ENCODE measurements at regions of chr3 and their contacts with region 1.

Region 1: GRCh38 chr3:50192689-50193141 is 1.3 kb downstream of the GNAT1 start:
- DNase-seq: peak in 2 of 3 donors; percentile 85 to 89
- ATAC-seq: peak; percentile 66
- H3K4me3 ChIP-seq: no peak overlapping the region
- H3K4me1 ChIP-seq: peaks cover 6% of the 10 kb centered on the region
- CTCF ChIP-seq: peak; percentile 87

Region 2: DNA sequence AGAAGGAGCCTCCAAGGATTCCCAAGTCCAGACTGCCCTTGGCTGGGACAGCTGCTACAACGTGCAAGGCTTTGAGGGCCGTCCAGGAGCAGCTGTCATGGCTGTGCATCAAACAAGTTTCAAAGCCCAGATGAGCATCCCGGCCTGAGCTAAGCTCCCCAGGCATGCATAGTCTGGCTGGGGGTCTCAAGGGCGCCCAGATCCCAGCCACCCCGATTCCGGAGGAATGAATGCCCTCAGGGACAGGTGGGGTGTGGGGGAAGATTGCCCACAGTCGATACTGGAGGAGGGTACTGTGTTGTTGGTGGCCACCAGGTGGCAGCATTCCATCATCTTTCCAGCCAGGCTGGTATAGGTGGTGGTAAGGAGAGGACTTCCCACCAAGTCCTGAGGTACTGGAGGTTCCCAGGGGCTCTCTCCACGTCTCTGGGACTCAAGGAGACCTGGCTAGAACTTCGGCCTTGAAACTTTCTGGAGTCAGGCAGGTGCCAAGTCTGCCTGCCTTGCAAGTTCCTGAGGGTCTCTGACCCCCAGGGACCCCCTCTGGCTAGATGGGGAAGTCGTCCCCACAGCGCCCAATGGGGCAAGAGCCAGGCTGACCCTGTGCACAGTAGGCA is 71.2 kb before region 1 on chr3:
- intact Hi-C with region 1: loop called (anchors 1 to 5 kb)
- DNase-seq: peak; percentile 73 to 82 (median 78)
- ATAC-seq: peak; percentile 86
- H3K4me3 ChIP-seq: no peak overlapping the region
- H3K4me1 ChIP-seq: no peaks in the 10 kb centered on the region
- CTCF ChIP-seq: peak; percentile 41

Region 3: GRCh38 chr3:50227390-50228183 is 34.9 kb after region 1 on chr3:
- intact Hi-C with region 1: loop called (anchors 2 to 5 kb)
- DNase-seq: peak; percentile 92 to 97 (median 96)
- ATAC-seq: peak; percentile 95
- H3K4me3 ChIP-seq: peak overlapping the region; percentile 27
- H3K4me1 ChIP-seq: peaks cover 12% of the 10 kb centered on the region
- CTCF ChIP-seq: peak; percentile 84

Region 4: DNA sequence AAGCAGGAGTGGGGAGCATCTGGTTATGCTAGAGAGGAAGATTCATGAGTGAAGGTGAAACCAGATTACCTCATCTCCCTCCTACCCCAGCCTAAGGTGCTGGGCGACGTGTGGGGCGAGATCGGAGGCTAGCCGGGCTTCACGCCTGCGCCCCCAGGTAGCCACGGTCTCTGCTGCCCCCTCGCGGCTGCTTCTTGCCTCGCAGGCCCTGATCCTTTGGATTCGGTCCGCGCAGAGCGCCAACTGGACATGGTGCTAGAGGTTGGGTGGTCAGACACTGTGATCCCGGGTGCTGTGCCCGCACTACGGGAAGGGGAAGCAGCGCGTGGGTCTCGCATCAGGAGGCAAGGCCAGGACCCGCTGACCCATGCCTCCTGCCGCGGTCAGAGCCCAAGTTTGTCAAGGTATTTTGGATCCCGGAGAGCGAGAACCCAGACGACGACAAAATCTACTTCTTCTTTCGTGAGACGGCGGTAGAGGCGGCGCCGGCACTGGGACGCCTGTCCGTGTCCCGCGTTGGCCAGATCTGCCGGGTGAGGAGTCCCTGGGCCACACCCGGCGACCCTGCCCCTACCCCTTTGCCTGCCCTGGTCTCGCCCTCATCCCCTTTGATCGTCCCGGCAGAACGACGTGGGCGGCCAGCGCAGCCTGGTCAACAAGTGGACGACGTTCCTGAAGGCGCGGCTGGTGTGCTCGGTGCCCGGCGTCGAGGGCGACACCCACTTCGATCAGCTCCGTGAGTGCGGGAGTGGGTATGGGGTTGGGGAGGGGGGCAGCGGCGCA is 80.4 kb after region 1 on chr3:
- intact Hi-C with region 1: loop called (anchors 10 kb)
- DNase-seq: peak; percentile 89 to 95 (median 92)
- ATAC-seq: peak; percentile 72
- H3K4me3 ChIP-seq: no peak overlapping the region
- H3K4me1 ChIP-seq: peaks cover 40% of the 10 kb centered on the region
- CTCF ChIP-seq: peak; percentile 97

Measured in mucosa of descending colon (tissue), 3 donors.